ENCODE measurements at regions of chr22 and their contacts with region 1.

Region 1: DNA sequence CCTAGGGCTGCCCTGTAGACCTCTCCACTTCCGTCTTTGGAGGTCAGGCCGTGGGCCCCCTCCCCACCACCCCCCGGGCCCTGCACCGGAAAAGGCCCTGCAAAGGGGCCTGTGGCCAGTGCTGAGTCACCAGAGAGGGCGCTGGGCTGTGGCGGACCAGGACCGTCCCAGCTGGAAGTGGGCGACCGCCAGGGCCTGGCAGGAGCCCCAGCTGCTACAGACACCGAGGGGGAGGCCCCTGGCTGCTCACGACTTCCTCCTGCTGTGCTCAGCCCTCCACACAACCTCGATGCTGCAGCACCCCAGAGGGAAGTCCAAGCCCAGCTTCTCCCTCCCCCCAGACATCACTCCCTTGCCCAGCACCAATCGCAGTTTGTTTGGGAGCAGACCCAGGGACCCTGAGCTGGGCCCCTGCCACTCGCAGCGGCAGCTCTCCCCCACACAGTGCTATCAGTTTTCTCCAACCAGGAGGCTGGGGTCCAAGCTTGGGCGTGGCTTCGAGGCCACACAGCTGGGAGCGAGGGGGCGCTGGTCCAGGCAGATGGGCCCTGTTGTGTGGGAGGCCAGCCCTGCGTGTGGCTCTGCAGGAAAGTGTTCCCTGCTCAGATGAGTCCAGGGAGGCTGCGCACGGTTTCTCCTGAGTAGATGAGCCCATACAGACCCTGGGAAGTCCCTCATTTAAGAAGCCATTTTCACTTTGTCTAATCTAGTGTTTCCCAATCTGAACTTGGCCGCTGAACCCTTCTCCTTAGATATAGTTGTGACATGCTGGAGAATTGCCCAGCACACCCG is 5.6 kb upstream of the SH3BP1 start:
- DNase-seq: peak; percentile 88
- ATAC-seq: peak; percentile 76
- H3K4me3 ChIP-seq: peak overlapping the region in 4 of 5 experiments; percentile 30 to 56 (median 40)
- H3K4me3 Mint-ChIP-seq: peak overlapping the region; percentile 87
- H3K27ac ChIP-seq: peak overlapping the region; percentile 89 to 94
- H3K27ac Mint-ChIP-seq: peak overlapping the region; percentile 97
- H3K4me1 ChIP-seq: peaks cover 61 to 68% of the 10 kb centered on the region in 2 donors
- H3K4me1 Mint-ChIP-seq: peaks cover 60% of the 10 kb centered on the region
- H3K27me3 ChIP-seq: no peaks in the 10 kb centered on the region
- H3K27me3 Mint-ChIP-seq: no peaks in the 10 kb centered on the region
- CTCF ChIP-seq: peak; percentile 19

Region 2: GRCh38 chr22:37552524-37553163 is 81.2 kb before region 1 on chr22:
- CTCF ChIA-PET with region 1: no interaction called
- POLR2A ChIA-PET with region 1: no interaction called
- intact Hi-C with region 1: no loop called
- DNase-seq: no peak
- ATAC-seq: no peak
- H3K4me3 ChIP-seq: no peak overlapping the region
- H3K4me3 Mint-ChIP-seq: no peak overlapping the region
- H3K27ac ChIP-seq: no peak overlapping the region
- H3K27ac Mint-ChIP-seq: peak overlapping the region; percentile 56
- H3K4me1 ChIP-seq: no peaks in the 10 kb centered on the region
- H3K4me1 Mint-ChIP-seq: no peaks in the 10 kb centered on the region
- H3K27me3 ChIP-seq: peaks cover 0 to 33% (median 4%) of the 10 kb centered on the region in 4 experiments
- H3K27me3 Mint-ChIP-seq: peaks cover 37% of the 10 kb centered on the region
- CTCF ChIP-seq: no peak

Region 3: DNA sequence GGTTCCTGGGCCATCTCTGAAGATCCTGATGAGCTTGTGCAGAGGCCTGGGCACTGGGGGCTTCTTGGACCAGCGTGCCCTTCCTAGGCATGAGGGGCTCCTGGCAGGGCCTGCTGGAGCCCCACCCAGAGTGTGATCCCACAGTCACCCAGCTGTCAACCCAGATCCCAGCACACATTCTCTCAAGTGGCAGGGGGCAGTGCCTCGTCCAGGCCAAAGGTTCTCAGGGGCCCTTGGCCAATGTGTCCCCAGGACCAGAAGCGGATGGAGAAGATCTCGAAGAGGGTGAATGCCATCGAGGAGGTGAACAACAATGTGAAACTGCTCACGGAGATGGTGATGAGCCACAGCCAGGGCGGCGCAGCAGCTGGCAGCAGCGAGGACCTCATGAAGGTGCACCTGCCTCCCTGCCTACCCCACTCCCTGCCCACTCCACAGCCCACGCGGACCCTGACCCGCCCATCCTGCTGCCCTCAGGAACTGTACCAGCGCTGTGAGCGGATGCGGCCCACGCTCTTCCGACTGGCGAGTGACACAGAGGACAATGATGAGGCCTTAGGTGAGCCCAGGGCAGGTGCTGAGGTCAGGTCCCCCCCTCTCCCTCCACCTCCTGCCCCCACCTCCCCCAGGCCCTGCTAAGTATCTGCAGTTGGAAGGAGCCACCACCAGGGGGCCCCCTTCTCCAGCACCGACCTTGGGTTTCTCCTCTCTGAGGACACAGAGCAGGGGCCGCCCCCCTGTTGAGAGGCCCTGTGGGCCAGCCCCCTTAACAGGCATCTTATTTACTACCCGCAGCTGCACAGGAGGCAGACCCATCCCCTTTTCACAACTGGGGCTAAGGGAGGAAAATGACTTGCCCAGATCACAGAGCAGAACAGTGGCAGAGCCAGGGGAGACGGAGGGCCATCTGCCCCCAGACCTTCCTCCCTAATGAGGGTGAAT is 10.5 kb before region 1 on chr22:
- CTCF ChIA-PET with region 1: interaction called, 620 read pairs
- POLR2A ChIA-PET with region 1: interaction called, 11 read pairs
- intact Hi-C with region 1: loop called (anchors 1 kb)
- DNase-seq: peak; percentile 83
- ATAC-seq: peak; percentile 83
- H3K4me3 ChIP-seq: no peak overlapping the region
- H3K4me3 Mint-ChIP-seq: peak overlapping the region; percentile 61
- H3K27ac ChIP-seq: peak overlapping the region; percentile 47 to 52
- H3K27ac Mint-ChIP-seq: peak overlapping the region; percentile 92
- H3K4me1 ChIP-seq: peaks cover 40 to 69% of the 10 kb centered on the region in 2 donors
- H3K4me1 Mint-ChIP-seq: peaks cover 60% of the 10 kb centered on the region
- H3K27me3 ChIP-seq: no peaks in the 10 kb centered on the region
- H3K27me3 Mint-ChIP-seq: no peaks in the 10 kb centered on the region
- CTCF ChIP-seq: peak; percentile 86

Region 4: GRCh38 chr22:37676736-37677492 is 43.1 kb after region 1 on chr22:
- CTCF ChIA-PET with region 1: interaction called, 501 read pairs
- POLR2A ChIA-PET with region 1: interaction called, 22 read pairs
- intact Hi-C with region 1: loop called (anchors 2 kb)
- DNase-seq: peak; percentile 95
- ATAC-seq: peak; percentile 83
- H3K4me3 ChIP-seq: peak overlapping the region; percentile 73 to 92 (median 81)
- H3K4me3 Mint-ChIP-seq: peak overlapping the region; percentile 96
- H3K27ac ChIP-seq: peak overlapping the region; percentile 98
- H3K27ac Mint-ChIP-seq: peak overlapping the region; percentile 97
- H3K4me1 ChIP-seq: peaks cover 34 to 63% of the 10 kb centered on the region in 2 donors
- H3K4me1 Mint-ChIP-seq: peaks cover 56% of the 10 kb centered on the region
- H3K27me3 ChIP-seq: no peaks in the 10 kb centered on the region
- H3K27me3 Mint-ChIP-seq: no peaks in the 10 kb centered on the region
- CTCF ChIP-seq: no peak

Region 5: DNA sequence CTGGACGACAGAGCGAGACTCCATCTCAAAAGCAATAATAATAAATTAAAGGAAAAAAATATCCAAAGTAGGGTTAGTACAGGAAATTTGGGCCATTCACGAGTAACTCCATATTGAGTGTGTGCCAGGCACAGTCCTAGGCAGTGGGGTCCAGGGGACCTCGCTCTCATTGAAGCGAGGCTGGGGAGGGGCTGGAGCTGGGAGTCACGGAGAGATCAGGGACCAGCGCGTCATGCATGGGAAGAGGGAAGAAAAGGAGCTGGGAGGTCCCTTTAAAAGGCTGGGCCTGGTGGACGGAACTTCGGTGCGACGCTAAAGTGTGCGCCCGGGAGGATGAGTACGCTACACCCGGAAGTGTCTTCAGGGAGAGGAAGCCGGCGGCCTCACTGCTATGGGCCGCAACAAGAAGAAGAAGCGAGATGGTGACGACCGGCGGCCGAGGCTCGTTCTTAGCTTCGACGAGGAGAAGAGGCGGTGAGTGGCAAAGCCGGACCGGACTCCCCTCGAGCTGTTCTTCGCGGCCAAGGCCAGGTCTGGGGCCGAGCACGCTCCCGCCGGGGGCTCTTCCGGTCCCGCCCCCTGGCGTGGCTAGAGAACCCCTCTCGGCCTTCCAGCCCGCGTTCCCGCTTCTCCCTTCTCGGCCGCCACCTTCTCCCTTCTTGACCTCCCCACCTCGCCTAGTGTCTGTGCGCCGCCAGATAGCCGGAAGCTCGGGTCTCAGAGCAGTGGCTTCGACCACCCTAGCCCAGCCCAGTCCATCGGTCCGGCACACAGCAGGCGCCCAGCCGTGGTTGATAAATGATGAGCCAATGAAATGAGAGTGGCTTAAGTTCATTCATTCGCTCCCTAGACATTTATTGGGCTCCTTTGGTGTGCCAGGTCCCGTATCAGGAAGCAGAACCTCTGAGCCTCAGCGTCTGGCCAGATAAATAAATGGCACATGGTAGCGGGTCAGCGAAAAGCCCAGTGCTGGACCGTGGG is 52.5 kb after region 1 on chr22 and contains the start of gene NOL12:
- CTCF ChIA-PET with region 1: interaction called, 501 read pairs
- POLR2A ChIA-PET with region 1: interaction called, 5 read pairs
- intact Hi-C with region 1: no loop called
- DNase-seq: peak; percentile 93
- ATAC-seq: peak; percentile 86
- H3K4me3 ChIP-seq: peak within 1 kb of the TSS; percentile 79 to 98 (median 88)
- H3K4me3 Mint-ChIP-seq: peak within 1 kb of the TSS; percentile 99
- H3K27ac ChIP-seq: peak within 1 kb of the TSS; percentile 70 to 81
- H3K27ac Mint-ChIP-seq: peak within 1 kb of the TSS; percentile 95
- H3K4me1 ChIP-seq: peaks cover 10 to 30% of the 10 kb centered on the region in 2 donors
- H3K4me1 Mint-ChIP-seq: peaks cover 28% of the 10 kb centered on the region
- H3K27me3 ChIP-seq: no peaks in the 10 kb centered on the region
- H3K27me3 Mint-ChIP-seq: no peaks in the 10 kb centered on the region
- CTCF ChIP-seq: no peak
- total RNA-seq, gene NOL12: 34.7 and 38.5 TPM in 2 replicates

Region 6: DNA sequence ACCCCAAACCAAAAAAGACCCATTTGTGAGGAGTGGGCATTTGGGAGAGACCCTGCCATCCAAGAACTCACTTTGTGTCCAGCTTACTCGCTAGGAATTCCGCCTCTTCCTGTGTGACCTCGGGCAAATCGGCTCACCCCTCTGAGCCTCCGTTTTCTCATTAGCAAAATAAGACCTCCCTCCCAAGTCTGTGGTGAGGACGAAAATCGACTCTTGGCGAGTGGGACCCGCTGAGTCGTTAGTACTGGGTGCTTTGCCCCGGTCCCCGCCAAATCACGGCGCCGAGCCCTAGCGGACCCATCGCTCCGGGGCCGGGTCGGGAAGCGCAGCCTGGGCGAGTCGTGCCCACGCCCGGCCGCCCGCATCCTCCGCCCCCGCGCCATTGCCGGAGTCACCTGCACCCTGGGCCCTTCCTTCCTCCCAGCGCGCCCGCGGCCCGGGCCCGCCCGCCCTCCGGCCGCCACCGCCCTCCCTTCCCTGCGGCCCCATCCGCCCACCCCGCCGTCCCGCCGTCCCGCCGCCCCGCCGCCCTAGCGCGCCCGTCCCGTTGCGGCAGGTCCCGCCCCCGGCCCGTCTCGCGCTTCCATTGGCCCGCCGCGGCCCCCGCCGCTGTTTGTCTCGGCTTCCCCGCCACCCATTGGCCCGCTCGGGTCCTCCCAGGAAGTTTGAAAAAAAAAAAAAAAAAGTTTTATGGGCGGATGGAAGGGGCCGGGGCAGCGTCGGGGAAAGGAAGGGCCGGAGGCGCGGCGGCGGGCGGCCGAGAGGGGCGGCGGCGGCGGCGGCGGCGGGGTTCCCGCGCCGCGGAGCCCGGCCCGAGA is 111.9 kb after region 1 on chr22:
- CTCF ChIA-PET with region 1: no interaction called
- POLR2A ChIA-PET with region 1: no interaction called
- intact Hi-C with region 1: loop called (anchors 5 kb)
- DNase-seq: peak; percentile 90
- ATAC-seq: peak; percentile 96
- H3K4me3 ChIP-seq: peak overlapping the region; percentile 66 to 85 (median 73)
- H3K4me3 Mint-ChIP-seq: peak overlapping the region; percentile 93
- H3K27ac ChIP-seq: peak overlapping the region in 1 of 2 donors; percentile 74
- H3K27ac Mint-ChIP-seq: peak overlapping the region; percentile 87
- H3K4me1 ChIP-seq: peaks cover 14 to 20% of the 10 kb centered on the region in 2 donors
- H3K4me1 Mint-ChIP-seq: peaks cover 24% of the 10 kb centered on the region
- H3K27me3 ChIP-seq: no peaks in the 10 kb centered on the region
- H3K27me3 Mint-ChIP-seq: no peaks in the 10 kb centered on the region
- CTCF ChIP-seq: no peak

Region 7: DNA sequence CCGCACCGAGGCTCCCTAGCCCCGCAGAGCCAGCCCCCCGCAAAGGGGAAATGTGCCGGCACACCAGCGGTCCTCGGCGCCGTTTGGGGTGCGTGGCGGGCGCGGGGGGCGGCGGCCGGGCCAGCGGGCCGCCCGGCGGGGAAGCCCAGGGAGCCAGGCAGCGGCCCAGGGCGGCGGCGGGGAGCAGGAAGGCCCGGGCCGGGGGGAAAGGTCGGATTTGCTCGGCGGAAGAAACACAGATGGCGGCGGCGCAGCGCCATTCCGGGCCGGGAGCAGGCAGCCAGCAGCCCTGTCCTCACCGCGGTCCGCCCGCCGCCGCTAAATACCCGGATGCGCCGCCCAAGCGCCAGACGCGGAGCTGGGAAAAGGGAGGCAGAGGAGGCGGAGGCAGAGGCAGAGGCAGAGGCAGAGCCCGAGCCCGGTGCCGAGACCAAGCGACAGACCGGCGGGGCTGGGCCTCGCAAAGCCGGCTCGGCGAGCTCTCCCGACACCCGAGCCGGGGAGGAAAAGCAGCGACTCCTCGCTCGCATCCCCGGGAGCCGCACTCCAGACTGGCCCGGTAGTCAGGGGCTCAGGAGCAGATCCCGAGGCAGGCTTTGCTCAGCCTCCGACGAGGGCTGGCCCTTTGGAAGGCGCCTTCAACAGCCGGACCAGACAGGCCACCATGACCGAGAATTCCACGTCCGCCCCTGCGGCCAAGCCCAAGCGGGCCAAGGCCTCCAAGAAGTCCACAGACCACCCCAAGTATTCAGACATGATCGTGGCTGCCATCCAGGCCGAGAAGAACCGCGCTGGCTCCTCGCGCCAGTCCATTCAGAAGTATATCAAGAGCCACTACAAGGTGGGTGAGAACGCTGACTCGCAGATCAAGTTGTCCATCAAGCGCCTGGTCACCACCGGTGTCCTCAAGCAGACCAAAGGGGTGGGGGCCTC is 171.3 kb after region 1 on chr22:
- CTCF ChIA-PET with region 1: no interaction called
- POLR2A ChIA-PET with region 1: no interaction called
- intact Hi-C with region 1: no loop called
- DNase-seq: peak; percentile 72
- ATAC-seq: peak; percentile 6
- H3K4me3 ChIP-seq: peak overlapping the region in 4 of 5 experiments; percentile 42 to 57 (median 50)
- H3K4me3 Mint-ChIP-seq: peak overlapping the region; percentile 74
- H3K27ac ChIP-seq: no peak overlapping the region
- H3K27ac Mint-ChIP-seq: peak overlapping the region; percentile 59
- H3K4me1 ChIP-seq: peaks cover 59 to 68% of the 10 kb centered on the region in 2 donors
- H3K4me1 Mint-ChIP-seq: peaks cover 37% of the 10 kb centered on the region
- H3K27me3 ChIP-seq: peaks cover 0 to 91% (median 58%) of the 10 kb centered on the region in 4 experiments
- H3K27me3 Mint-ChIP-seq: peaks cover 59% of the 10 kb centered on the region
- CTCF ChIP-seq: no peak

Region 8: GRCh38 chr22:37824674-37825641 is 191.1 kb after region 1 on chr22:
- CTCF ChIA-PET with region 1: no interaction called
- POLR2A ChIA-PET with region 1: no interaction called
- intact Hi-C with region 1: no loop called
- DNase-seq: peak; percentile 45
- ATAC-seq: no peak
- H3K4me3 ChIP-seq: peak overlapping the region in 1 of 5 experiments; percentile 15
- H3K4me3 Mint-ChIP-seq: peak overlapping the region; percentile 72
- H3K27ac ChIP-seq: no peak overlapping the region
- H3K27ac Mint-ChIP-seq: no peak overlapping the region
- H3K4me1 ChIP-seq: peaks cover 0 to 2% of the 10 kb centered on the region in 2 donors
- H3K4me1 Mint-ChIP-seq: peaks cover 6% of the 10 kb centered on the region
- H3K27me3 ChIP-seq: peaks cover 0 to 22% (median 7%) of the 10 kb centered on the region in 4 experiments
- H3K27me3 Mint-ChIP-seq: peaks cover 24% of the 10 kb centered on the region
- CTCF ChIP-seq: no peak

Measured in B cell (primary cell).